Heart left ventricle (tissue), 16 donors: ENCODE measurements at regions of chr2 and their contacts with region 1.

Region 1: GRCh38 chr2:45930396-45930792 is 278.9 kb downstream of the PRKCE start:
- DNase-seq: no peak
- ATAC-seq: peak in 1 of 4 donors; percentile 12
- H3K4me3 ChIP-seq: no peak overlapping the region
- H3K27ac ChIP-seq: peak overlapping the region in 10 of 12 donors; percentile 2 to 90 (median 72)
- H3K4me1 ChIP-seq: peaks cover 0 to 51% (median 18%) of the 10 kb centered on the region in 12 donors
- H3K27me3 ChIP-seq: no peaks in the 10 kb centered on the region
- CTCF ChIP-seq: no peak
- POLR2A ChIP-seq: no peak

Region 2: DNA sequence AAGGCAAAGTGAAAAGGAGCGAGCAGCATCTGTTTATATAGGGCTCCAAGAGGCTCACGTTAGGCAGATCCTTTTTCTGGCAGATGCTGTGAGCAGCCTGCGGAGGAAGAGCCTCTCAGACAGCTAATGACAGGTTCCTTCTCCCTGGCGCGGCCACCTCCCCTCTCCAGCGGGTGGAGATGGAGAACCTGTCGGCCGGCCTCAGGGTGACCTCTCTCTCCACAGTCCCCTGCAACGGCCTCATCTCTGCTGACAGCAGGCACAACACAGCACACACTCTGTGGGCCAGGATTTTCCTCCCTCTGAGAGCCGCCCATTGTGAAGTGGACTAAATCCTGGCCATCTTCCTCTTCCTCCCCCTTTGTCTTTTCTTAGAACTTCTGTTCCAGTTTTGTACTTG is 159.1 kb before region 1 on chr2:
- intact Hi-C with region 1: loop called in 8 of 10 experiments (anchors 5 to 10 kb)
- DNase-seq: peak; percentile 76 to 87 (median 81)
- ATAC-seq: peak; percentile 93 to 94 (median 94)
- H3K4me3 ChIP-seq: peak overlapping the region in 8 of 12 donors; percentile 20 to 43 (median 34)
- H3K27ac ChIP-seq: peak overlapping the region; percentile 55 to 81 (median 76)
- H3K4me1 ChIP-seq: peaks cover 0 to 73% (median 31%) of the 10 kb centered on the region in 12 donors
- H3K27me3 ChIP-seq: no peaks in the 10 kb centered on the region
- CTCF ChIP-seq: peak in 2 of 12 donors; percentile 10 to 12
- POLR2A ChIP-seq: no peak

Region 3: GRCh38 chr2:45778720-45779171 is 151.6 kb before region 1 on chr2:
- intact Hi-C with region 1: loop called in 9 of 10 experiments (anchors 5 to 10 kb)
- DNase-seq: peak in 4 of 5 donors; percentile 44 to 72 (median 65)
- ATAC-seq: peak; percentile 50 to 64 (median 58)
- H3K4me3 ChIP-seq: no peak overlapping the region
- H3K27ac ChIP-seq: no peak overlapping the region
- H3K4me1 ChIP-seq: peaks cover 0 to 48% (median 24%) of the 10 kb centered on the region in 12 donors
- H3K27me3 ChIP-seq: no peaks in the 10 kb centered on the region
- CTCF ChIP-seq: peak; percentile 69 to 88 (median 80)
- POLR2A ChIP-seq: no peak

Region 4: DNA sequence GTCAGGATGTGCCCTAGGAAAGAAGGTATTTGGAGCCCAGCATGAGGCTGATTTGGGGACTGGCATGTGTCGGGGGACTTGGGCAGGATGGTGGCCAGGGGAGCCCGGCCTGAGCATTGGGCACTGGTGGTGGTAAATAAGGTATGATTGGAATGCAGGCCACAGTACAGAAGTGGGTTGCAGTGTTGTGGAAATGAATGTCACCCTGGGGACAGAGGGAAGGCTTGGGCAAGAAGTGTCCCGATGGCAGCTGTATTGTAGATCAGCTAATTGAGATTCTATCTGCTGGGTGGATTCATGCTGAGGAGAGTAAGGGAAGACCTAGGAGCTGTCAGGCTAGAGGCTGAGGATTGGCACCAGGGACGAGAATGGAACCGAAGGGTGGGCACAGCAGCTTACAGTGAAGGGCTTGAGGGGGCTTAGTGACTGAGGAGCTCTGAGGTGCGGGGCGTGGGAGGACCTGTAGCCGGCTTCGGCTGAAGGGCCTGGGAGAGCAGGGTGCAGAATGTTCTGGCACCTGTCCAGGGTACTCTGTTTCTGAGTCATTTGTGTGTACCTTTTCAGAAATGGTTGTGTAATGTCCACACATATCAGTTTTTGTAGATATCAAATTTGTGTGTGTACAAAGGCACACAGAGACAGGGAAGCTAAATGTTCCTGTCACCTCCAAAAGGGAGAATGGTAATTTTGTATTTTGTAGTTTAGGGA is 108.7 kb before region 1 on chr2:
- intact Hi-C with region 1: loop called in 5 of 10 experiments (anchors 2 to 10 kb)
- DNase-seq: peak in 4 of 5 donors; percentile 32 to 80 (median 44)
- ATAC-seq: peak; percentile 8 to 58 (median 46)
- H3K4me3 ChIP-seq: no peak overlapping the region
- H3K27ac ChIP-seq: peak overlapping the region in 10 of 12 donors; percentile 8 to 79 (median 56)
- H3K4me1 ChIP-seq: peaks cover 3 to 70% (median 32%) of the 10 kb centered on the region in 12 donors
- H3K27me3 ChIP-seq: no peaks in the 10 kb centered on the region
- CTCF ChIP-seq: no peak
- POLR2A ChIP-seq: no peak

Region 5: DNA sequence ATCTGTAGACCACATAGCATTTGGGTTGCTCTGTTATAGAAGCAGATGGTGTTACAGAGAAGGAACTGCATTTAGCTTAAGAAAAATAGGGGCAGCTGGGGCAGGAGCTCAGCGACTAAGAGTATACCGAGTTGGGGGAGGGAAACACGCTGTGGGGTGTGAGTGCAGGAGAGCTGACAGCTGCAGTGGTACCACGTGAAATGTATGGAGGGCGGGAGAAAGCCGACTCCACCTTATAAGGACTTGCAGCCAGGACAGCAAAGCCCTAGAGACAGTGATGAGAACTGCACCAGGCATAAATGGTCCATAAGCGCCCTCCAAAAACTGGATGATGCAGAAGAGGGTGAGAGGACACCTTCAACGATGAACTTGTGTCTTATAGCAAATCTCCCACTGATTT is 41.3 kb before region 1 on chr2:
- intact Hi-C with region 1: loop called in 5 of 10 experiments (anchors 5 to 10 kb)
- DNase-seq: peak in 3 of 5 donors; percentile 29 to 72 (median 66)
- ATAC-seq: peak; percentile 28 to 78 (median 72)
- H3K4me3 ChIP-seq: no peak overlapping the region
- H3K27ac ChIP-seq: peak overlapping the region in 3 of 12 donors; percentile 4 to 82 (median 19)
- H3K4me1 ChIP-seq: peaks cover 4 to 93% (median 55%) of the 10 kb centered on the region in 12 donors
- H3K27me3 ChIP-seq: no peaks in the 10 kb centered on the region
- CTCF ChIP-seq: peak in 3 of 12 donors; percentile 16 to 19 (median 17)
- POLR2A ChIP-seq: no peak

Region 6: GRCh38 chr2:45993476-45993991 is 63.1 kb after region 1 on chr2:
- intact Hi-C with region 1: no loop called
- DNase-seq: peak in 4 of 5 donors; percentile 42 to 67 (median 50)
- ATAC-seq: peak in 3 of 4 donors; percentile 44 to 67 (median 66)
- H3K4me3 ChIP-seq: no peak overlapping the region
- H3K27ac ChIP-seq: no peak overlapping the region
- H3K4me1 ChIP-seq: peaks cover 0 to 22% (median 14%) of the 10 kb centered on the region in 12 donors
- H3K27me3 ChIP-seq: no peaks in the 10 kb centered on the region
- CTCF ChIP-seq: peak; percentile 76 to 88 (median 83)
- POLR2A ChIP-seq: no peak